ENCODE measurements at regions of chr22 and their contacts with region 1.

Region 1: DNA sequence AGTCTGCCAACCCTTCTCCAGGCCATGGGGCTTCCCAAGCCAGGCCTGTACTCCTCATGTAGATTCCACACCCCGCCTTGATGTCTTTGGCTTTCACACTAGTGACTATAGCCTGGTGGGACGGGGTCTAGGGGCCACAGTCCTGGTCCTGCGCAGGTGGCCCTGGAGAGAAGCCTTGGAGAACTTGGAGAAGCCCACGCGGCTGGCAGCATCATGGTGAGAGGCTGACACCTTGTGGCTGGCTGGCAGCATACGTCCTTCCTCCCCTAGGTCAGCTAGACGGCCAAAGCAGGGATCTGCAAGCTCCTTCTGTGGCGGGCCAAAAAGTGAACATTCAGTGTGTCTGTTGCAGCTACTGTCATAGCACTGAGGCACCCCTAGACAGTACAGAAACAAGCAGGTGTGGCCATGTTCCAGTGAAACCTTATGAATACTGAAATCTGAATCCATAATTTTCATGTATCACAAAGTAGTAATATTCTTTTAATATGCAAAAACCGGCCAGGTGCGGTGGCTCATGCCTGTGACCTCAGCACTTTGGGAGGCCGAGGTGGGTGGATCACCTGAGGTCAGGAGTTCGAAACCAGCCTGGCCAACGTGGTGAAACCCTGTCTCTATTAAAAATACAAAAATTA is 42.0 kb downstream of the FAM83F start:
- DNase-seq: peak; percentile 70
- ATAC-seq: peak; percentile 79

Region 2: DNA sequence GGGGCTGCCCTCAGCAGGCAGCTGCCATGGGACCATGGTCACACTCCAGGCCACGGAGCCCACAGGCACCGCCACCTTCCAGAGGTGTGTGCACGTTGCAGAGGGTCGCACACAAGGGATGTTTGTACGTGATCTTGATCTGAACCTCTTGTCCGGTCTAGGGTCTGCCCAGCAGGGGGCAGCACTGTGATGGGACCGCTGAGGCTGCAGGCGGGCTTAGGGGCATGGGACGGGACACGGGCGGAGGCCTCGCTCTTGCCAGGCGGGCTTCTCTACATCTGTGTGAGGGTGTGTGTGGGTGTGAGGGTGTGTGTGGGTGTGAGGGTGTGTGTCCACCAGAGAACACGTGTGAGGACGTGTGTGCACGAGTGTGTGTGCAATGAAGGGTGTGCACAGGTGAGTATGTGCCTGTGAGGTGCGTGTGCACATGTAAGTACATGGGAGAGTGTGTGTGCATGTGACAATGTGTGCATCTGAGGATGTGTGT is 413.8 kb before region 1 on chr22:
- intact Hi-C with region 1: loop called (anchors 5 kb)
- DNase-seq: peak; percentile 81
- ATAC-seq: peak; percentile 74

Region 3: GRCh38 chr22:40346178-40347118 is 309.7 kb after region 1 on chr22 and contains the start of gene ADSL:
- intact Hi-C with region 1: loop called (anchors 10 kb)
- DNase-seq: peak; percentile 92
- ATAC-seq: peak; percentile 98
- total RNA-seq, gene ADSL: 52.0 TPM

Measured in Right ventricle myocardium superior (tissue), 1 donor.